Calu3 (cell line): ENCODE measurements at regions of chr5 and their contacts with region 1.

Region 1: DNA sequence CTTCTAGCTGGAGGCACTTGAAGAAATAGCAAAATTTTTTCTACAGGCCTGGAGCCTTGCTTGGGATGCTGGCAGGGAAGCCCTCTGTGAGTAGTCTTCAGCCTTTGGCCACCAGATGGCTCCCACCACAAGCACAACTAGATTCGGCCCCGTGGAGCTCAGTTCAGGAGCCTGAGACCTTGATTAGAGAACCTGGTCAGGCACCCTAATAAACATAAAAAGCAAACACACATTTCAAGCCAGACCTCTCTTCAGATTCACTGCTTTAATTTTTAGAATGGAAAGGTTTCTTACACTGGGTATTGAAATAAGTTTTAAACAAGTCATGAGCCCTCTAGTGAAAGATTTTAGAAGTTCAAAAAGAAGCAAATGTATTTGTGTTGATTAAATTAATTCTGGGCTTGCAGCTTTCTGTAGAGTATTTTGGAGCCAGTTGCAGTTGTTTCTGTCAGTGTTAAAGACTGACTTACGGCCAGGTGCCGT is 41.4 kb downstream of the GLRX start:
- DNase-seq: peak; percentile 82
- H3K4me3 Mint-ChIP-seq: no peak overlapping the region
- H3K27ac Mint-ChIP-seq: no peak overlapping the region
- H3K4me1 Mint-ChIP-seq: no peaks in the 10 kb centered on the region
- H3K27me3 Mint-ChIP-seq: no peaks in the 10 kb centered on the region
- CTCF ChIP-seq: peak; percentile 94

Region 2: GRCh38 chr5:95646554-95647431 is 134.3 kb before region 1 on chr5 and contains the start of gene RFESD:
- CTCF ChIA-PET with region 1: interaction called, 12 read pairs
- intact Hi-C with region 1: loop called (anchors 1 kb)
- DNase-seq: peak; percentile 100
- H3K4me3 Mint-ChIP-seq: peak within 1 kb of the TSS; percentile 80
- H3K27ac Mint-ChIP-seq: peak within 1 kb of the TSS; percentile 75
- H3K4me1 Mint-ChIP-seq: peaks cover 18% of the 10 kb centered on the region
- H3K27me3 Mint-ChIP-seq: no peaks in the 10 kb centered on the region
- CTCF ChIP-seq: peak; percentile 47
- total RNA-seq, gene RFESD: 1.8 and 2.9 TPM in 2 replicates

Region 3: GRCh38 chr5:95664204-95664786 is 116.8 kb before region 1 on chr5:
- CTCF ChIA-PET with region 1: interaction called, 14 read pairs
- intact Hi-C with region 1: loop called (anchors 2 kb)
- DNase-seq: peak; percentile 31
- H3K4me3 Mint-ChIP-seq: no peak overlapping the region
- H3K27ac Mint-ChIP-seq: no peak overlapping the region
- H3K4me1 Mint-ChIP-seq: no peaks in the 10 kb centered on the region
- H3K27me3 Mint-ChIP-seq: no peaks in the 10 kb centered on the region
- CTCF ChIP-seq: peak; percentile 62

Region 4: DNA sequence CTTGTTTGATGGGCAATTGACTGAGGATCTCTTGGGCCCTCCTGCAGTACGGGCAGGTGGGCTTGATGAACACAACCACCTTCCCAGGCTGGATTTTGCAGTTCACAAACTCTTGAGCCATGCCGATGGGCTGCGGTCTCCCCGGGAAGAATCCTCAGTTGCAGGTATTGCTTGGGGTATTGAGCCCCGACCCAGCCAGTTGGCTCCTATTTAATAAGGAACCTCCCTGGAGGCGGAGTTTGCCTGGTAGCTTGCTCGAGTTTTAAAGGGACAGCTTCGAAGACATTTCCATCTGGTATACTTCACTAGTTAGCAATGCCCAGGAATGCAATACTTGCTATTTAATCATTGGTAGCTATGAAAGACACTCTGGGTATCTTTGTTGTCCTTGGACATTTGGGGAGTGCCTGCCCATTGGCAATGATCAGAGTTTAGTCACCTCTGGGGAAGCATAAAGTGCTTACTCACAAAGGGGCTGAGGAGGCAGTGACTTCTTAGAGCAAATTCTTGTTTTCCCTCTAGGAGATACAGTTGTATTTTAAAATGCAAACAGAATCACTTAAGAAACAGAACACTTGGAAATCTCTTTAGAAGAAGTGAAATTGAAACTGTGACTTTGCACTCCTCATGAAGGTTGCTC is 41.5 kb after region 1 on chr5 and contains the start of gene GLRX:
- CTCF ChIA-PET with region 1: interaction called, 14 read pairs
- intact Hi-C with region 1: no loop called
- DNase-seq: peak; percentile 73
- H3K4me3 Mint-ChIP-seq: peak within 1 kb of the TSS; percentile 86
- H3K27ac Mint-ChIP-seq: peak within 1 kb of the TSS; percentile 71
- H3K4me1 Mint-ChIP-seq: peaks cover 39% of the 10 kb centered on the region
- H3K27me3 Mint-ChIP-seq: no peaks in the 10 kb centered on the region
- CTCF ChIP-seq: no peak
- total RNA-seq, gene GLRX: 27.9 and 33.7 TPM in 2 replicates

Region 5: GRCh38 chr5:95835682-95836385 is 54.7 kb after region 1 on chr5:
- CTCF ChIA-PET with region 1: interaction called, 21 read pairs
- intact Hi-C with region 1: no loop called
- DNase-seq: no peak
- H3K4me3 Mint-ChIP-seq: peak overlapping the region; percentile 55
- H3K27ac Mint-ChIP-seq: peak overlapping the region; percentile 57
- H3K4me1 Mint-ChIP-seq: peaks cover 64% of the 10 kb centered on the region
- H3K27me3 Mint-ChIP-seq: no peaks in the 10 kb centered on the region
- CTCF ChIP-seq: no peak

Region 6: DNA sequence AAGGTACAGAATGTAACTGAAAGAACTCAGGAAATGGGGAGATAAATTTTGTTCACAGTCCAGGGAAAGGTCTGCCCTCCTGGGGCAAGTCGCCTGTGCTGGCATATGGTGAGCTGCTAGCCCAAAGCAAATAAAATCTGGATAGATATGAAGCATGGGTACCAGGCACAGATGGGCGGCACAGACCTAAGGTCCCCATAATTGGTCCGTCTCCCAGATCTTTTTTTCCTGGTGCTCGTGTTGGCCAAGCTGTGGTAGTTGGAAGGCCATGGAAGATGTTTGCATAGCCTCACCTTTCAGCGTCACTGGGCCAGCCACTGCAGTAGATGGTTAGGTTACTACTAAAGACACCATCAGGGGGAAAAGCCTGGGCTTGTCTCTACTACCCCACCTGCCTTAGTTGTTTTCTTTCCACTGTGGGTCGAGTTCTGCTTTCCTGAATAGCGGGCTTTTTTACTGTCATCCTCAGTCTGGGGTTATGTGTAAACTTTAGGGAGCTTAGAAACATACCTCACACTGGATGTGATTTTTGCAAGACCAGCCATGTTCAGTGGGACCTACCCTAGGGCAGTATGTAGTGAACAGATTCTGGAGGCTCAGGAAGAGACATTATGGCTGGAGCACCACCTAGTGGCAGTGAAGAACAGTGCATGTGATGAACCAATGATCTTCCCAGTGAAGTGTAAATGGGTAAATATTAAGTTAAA is 65.6 kb after region 1 on chr5:
- CTCF ChIA-PET with region 1: interaction called, 28 read pairs
- intact Hi-C with region 1: loop called (anchors 1 kb)
- DNase-seq: peak; percentile 76
- H3K4me3 Mint-ChIP-seq: no peak overlapping the region
- H3K27ac Mint-ChIP-seq: no peak overlapping the region
- H3K4me1 Mint-ChIP-seq: peaks cover 15% of the 10 kb centered on the region
- H3K27me3 Mint-ChIP-seq: no peaks in the 10 kb centered on the region
- CTCF ChIP-seq: peak; percentile 83